AG04449 (cell line): ENCODE measurements at regions of chr10 and their contacts with region 1.

Region 1: GRCh38 chr10:67779465-67780203 is 58.4 kb downstream of the DNAJC12 start:
- DNase-seq: peak; percentile 59
- H3K4me3 ChIP-seq: no peak overlapping the region
- CTCF ChIP-seq: peak; percentile 54

Region 2: GRCh38 chr10:67306588-67307205 is 472.9 kb before region 1 on chr10:
- CTCF ChIA-PET with region 1: interaction called, 12 read pairs
- POLR2A ChIA-PET with region 1: interaction called, 3 read pairs
- DNase-seq: no peak
- H3K4me3 ChIP-seq: no peak overlapping the region
- CTCF ChIP-seq: peak; percentile 17

Region 3: GRCh38 chr10:67506082-67506756 is 273.4 kb before region 1 on chr10:
- CTCF ChIA-PET with region 1: no interaction called
- POLR2A ChIA-PET with region 1: no interaction called
- DNase-seq: no peak
- H3K4me3 ChIP-seq: no peak overlapping the region
- CTCF ChIP-seq: no peak

Region 4: DNA sequence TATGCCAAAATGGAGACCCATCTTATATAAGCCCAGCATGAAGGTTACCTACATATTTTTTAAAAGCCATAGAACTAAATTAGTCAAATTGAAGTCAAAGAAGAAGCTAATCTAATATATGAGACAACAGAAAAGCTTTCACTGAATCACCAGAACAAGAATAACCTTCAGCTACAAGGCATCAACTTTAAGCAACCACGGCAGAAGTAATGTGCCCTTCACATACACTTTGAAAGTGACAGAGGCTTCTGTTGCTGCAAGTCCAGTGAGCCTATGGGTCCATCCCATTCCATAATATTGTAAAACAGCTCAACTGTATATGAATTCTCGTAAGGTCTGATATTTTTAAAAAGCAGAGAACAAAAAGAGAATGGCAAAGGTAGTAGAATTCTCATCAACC is 120.1 kb before region 1 on chr10:
- CTCF ChIA-PET with region 1: interaction called, 74 read pairs
- POLR2A ChIA-PET with region 1: no interaction called
- DNase-seq: no peak
- H3K4me3 ChIP-seq: no peak overlapping the region
- CTCF ChIP-seq: no peak

Region 5: GRCh38 chr10:67697724-67698131 is 81.9 kb before region 1 on chr10:
- CTCF ChIA-PET with region 1: interaction called, 171 read pairs
- POLR2A ChIA-PET with region 1: no interaction called
- DNase-seq: no peak
- H3K4me3 ChIP-seq: no peak overlapping the region
- CTCF ChIP-seq: peak; percentile 39

Region 6: DNA sequence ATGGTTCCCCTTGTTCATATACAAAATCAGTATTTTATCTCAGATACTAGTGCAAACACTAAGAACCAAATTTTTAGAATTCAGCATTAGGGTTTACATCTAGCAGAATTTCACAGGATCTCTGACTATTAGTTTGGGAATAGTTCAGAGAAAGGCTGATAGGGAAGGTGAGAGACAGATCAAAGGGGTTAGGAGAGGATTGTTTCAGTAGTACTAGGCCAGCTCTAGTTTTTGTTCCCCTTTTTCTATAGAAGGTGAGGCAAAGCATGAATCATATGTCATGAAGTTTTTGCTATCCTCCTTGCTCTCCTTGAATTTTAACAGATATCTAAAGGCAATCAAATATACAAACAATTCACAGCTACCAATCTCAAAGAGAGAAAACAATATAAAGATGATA is 57.5 kb before region 1 on chr10:
- CTCF ChIA-PET with region 1: no interaction called
- POLR2A ChIA-PET with region 1: no interaction called
- DNase-seq: no peak
- H3K4me3 ChIP-seq: no peak overlapping the region
- CTCF ChIP-seq: no peak

Region 7: DNA sequence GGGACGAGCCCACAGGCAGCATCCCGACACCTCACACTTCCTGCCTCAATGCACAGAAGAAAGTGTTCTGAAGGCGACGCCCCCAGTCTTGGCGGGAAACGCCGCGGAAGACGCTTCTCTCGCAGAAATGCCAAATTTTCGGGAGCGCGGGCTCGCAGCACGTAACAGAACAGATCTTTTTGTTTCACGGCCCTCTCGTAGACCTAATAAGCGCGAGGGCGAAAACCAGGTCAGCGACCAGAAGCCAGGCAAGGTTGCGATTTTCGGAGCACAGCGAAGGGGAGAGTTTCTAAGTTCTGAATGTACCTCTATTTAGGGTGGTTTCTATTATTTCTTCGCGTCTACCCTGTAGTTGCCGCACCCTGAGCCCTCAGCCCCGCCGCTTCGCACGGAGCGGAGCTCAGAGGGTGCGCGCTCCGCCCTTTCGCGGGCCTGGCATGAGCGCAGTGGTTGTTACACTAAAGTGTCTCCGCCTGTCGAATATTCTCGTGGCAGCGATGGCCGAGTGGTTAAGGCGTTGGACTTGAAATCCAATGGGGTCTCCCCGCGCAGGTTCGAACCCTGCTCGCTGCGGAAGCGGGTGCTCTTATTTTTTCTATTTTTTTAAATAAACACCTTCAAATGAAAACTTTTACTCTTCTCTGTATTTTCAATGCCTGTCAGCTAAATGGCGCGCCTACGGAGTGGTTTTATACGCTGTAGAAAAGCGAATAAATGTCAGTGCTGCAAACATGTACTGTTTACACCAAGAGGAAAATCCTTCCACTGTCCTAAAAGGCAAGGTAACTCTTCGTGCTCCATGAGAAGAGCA is 15.4 kb before region 1 on chr10:
- CTCF ChIA-PET with region 1: interaction called, 79 read pairs
- POLR2A ChIA-PET with region 1: interaction called, 5 read pairs
- DNase-seq: peak; percentile 56
- H3K4me3 ChIP-seq: peak overlapping the region; percentile 83
- CTCF ChIP-seq: no peak

Region 8: GRCh38 chr10:68121852-68122251 is 342.2 kb after region 1 on chr10:
- CTCF ChIA-PET with region 1: no interaction called
- POLR2A ChIA-PET with region 1: no interaction called
- DNase-seq: no peak
- H3K4me3 ChIP-seq: no peak overlapping the region
- CTCF ChIP-seq: no peak